AG04449 (cell line): ENCODE measurements at regions of chr3 and their contacts with region 1.

Region 1: DNA sequence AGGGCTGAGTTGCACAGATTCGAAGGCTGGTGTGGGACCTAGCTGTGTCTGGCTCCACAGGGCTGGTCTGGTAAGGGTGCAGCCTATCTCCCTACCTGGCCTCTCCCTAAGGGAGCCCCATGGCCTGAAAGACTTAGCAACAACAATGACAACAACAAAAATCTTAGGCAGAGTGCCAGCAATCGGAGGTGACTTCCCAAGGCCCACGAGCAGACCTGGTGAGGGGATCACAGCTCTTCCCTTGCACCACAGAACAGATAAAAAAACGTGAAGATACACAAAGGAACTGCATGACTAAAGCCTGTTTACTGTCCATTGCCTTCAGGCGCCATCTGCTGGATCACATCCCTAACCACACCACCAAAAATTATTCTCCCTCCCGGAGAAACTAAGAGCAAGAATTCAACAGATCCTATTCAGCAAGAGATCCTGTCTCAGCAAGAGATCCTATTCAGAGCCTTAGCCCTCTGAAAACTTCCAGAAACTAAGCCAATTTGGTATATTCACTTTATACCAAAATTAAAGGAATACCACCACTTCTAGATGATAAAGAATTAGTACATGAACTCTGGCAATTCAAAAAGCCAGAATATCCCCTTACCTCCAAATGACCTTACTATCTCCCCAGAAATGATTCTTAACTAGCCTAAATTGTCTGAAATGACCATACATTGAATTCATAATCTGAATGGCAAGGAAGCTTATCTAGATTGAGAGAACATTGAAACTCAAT is 24.1 kb upstream of the OR5K4 start:
- DNase-seq: no peak
- H3K4me3 ChIP-seq: no peak overlapping the region
- CTCF ChIP-seq: peak; percentile 67

Region 2: GRCh38 chr3:98039322-98040024 is 290.1 kb before region 1 on chr3:
- CTCF ChIA-PET with region 1: interaction called, 132 read pairs
- POLR2A ChIA-PET with region 1: no interaction called
- DNase-seq: peak; percentile 56
- H3K4me3 ChIP-seq: peak overlapping the region; percentile 59
- CTCF ChIP-seq: peak; percentile 81

Region 3: GRCh38 chr3:98048586-98048985 is 281.0 kb before region 1 on chr3:
- CTCF ChIA-PET with region 1: interaction called, 132 read pairs
- POLR2A ChIA-PET with region 1: no interaction called
- DNase-seq: no peak
- H3K4me3 ChIP-seq: no peak overlapping the region
- CTCF ChIP-seq: no peak

Region 4: GRCh38 chr3:98573181-98573728 is 243.7 kb after region 1 on chr3:
- CTCF ChIA-PET with region 1: interaction called, 17 read pairs
- POLR2A ChIA-PET with region 1: no interaction called
- DNase-seq: no peak
- H3K4me3 ChIP-seq: no peak overlapping the region
- CTCF ChIP-seq: peak; percentile 10